ENCODE measurements at regions of chr19 and their contacts with region 1.

Region 1: DNA sequence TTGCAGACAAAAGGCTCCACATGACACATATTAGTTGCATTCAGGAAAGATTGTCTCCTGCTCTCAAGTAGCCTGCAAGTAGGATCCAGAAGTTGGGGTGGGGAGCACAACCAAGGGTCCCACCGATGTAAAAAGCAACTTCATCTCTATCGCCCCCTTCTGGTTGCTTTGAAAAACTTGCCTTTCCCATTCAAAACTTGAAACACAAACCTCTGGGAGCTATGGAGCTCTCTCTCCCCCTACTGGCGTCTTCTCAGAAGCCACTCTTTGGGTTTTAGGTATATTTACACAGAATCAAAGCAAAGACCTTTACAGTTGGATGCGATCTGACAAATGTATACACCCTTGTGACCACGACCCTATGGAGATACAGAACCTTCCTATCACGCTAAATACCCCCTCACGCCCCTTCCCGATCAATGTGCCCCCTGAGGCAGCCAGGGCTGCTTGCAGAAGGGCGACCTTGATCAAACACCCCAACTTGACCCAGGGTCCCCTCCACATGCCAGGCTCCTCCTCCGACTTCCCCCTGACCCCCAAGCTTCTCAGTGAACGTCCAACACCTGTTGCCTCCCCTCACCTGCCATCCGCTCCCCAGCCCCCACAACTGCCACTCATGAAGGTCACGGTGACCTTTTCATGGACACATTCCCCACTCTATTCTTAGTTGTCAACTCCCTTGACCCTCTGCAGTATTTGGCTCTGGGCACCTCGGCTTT is 10.1 kb downstream of the NOSIP start:
- DNase-seq: peak in 12 of 14 experiments; percentile 50 to 94 (median 66)
- ATAC-seq: peak; percentile 7
- H3K4me3 ChIP-seq: no peak overlapping the region
- H3K4me3 Mint-ChIP-seq: peak overlapping the region; percentile 85
- H3K27ac ChIP-seq: no peak overlapping the region
- H3K27ac Mint-ChIP-seq: peak overlapping the region; percentile 89
- H3K4me1 ChIP-seq: peaks cover 64% of the 10 kb centered on the region
- H3K4me1 Mint-ChIP-seq: peaks cover 55% of the 10 kb centered on the region
- H3K27me3 ChIP-seq: no peaks in the 10 kb centered on the region
- H3K27me3 Mint-ChIP-seq: no peaks in the 10 kb centered on the region
- CTCF ChIP-seq: peak; percentile 99

Region 2: DNA sequence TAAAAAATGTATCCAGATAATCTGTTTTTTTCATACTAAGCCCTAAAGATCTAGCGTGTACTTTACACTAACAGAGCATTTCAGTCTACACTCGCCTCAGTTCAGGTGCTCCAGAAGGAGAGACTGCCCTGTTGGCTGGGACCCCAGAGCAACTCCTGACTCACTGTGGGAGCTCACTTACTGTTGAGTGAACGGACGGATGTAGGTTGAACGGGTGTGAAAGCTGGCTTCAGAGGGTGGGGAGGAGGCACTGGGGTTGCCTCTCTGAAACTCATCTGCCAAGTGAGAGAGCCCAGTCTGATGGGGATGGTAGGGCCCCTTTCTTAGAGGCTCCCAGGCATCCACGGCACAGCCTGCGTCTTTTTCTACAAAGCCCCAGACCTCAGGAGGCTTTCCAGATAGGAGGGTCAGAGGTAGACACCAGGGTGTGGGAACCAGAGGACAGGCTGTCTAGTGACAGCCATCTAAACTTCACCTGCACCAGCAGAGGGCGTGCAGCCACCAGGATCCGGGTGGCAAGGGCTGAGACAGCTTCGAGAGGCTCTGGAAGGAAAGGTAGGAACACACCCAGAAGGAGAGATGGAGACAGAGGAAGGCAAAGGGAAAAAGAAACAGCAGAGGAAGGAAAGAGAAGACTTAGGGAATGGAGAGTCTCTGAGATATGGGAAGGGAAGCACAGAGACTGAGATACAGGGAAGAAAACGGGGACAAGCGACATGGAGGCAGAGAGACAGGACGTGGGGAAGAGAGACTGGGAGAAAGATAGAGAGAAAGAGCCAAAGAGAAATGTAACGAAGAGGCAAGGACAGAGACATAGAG is 178.5 kb before region 1 on chr19:
- CTCF ChIA-PET with region 1: interaction called, 7 read pairs
- POLR2A ChIA-PET with region 1: no interaction called
- intact Hi-C with region 1: loop called (anchors 2 kb)
- DNase-seq: peak; percentile 67 to 89 (median 76)
- ATAC-seq: peak; percentile 76
- H3K4me3 ChIP-seq: no peak overlapping the region
- H3K4me3 Mint-ChIP-seq: no peak overlapping the region
- H3K27ac ChIP-seq: no peak overlapping the region
- H3K27ac Mint-ChIP-seq: no peak overlapping the region
- H3K4me1 ChIP-seq: peaks cover 23% of the 10 kb centered on the region
- H3K4me1 Mint-ChIP-seq: peaks cover 19% of the 10 kb centered on the region
- H3K27me3 ChIP-seq: no peaks in the 10 kb centered on the region
- H3K27me3 Mint-ChIP-seq: no peaks in the 10 kb centered on the region
- CTCF ChIP-seq: peak; percentile 95

Region 3: GRCh38 chr19:49487277-49488045 is 82.8 kb before region 1 on chr19 and contains the start of gene RPL13A:
- CTCF ChIA-PET with region 1: interaction called, 4 read pairs
- POLR2A ChIA-PET with region 1: interaction called, 16 read pairs
- intact Hi-C with region 1: no loop called
- DNase-seq: peak; percentile 98 to 100 (median 99)
- ATAC-seq: peak; percentile 86
- H3K4me3 ChIP-seq: peak within 1 kb of the TSS; percentile 77
- H3K4me3 Mint-ChIP-seq: peak within 1 kb of the TSS; percentile 91
- H3K27ac ChIP-seq: peak within 1 kb of the TSS; percentile 60 to 81
- H3K27ac Mint-ChIP-seq: peak within 1 kb of the TSS; percentile 92
- H3K4me1 ChIP-seq: peaks cover 64% of the 10 kb centered on the region
- H3K4me1 Mint-ChIP-seq: peaks cover 55% of the 10 kb centered on the region
- H3K27me3 ChIP-seq: no peaks in the 10 kb centered on the region
- H3K27me3 Mint-ChIP-seq: no peaks in the 10 kb centered on the region
- CTCF ChIP-seq: no peak
- total RNA-seq, gene RPL13A: 5,328 to 5,481 TPM

Region 4: DNA sequence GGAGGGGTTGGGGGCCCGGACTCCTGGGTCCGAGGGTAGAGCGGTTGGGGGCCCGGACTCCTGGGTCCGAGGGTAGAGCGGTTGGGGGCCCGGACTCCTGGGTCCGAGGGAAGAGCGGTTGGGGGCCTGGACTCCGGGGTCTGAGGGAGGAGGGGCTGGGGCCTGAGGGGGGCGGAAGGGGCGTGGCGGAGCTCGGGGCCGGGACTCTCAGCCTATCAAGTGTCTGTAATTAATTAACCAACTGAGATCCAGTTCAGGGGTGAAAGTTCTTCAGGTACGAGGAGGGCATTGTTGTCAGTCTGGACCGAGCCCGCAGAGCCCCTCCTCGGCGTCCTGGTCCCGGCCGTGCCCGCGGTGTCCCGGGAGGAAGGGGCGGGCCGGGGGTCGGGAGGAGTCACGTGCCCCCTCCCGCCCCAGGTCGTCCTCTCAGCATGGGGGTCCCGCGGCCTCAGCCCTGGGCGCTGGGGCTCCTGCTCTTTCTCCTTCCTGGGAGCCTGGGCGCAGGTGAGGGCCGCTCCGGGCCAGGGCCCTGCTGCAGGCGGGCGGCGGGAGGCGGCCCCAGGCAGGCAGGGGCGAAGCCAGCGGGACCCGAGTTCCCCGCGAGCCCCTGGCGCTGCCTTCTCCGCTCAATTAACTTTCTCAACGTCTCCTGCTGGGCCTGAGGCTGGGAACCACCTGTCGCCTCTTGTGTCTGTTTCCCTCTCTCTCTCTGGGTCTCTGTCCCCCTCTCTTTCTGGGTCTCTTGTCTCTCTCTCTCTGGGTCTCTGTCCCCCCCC is 57.1 kb before region 1 on chr19:
- CTCF ChIA-PET with region 1: interaction called, 16 read pairs
- POLR2A ChIA-PET with region 1: interaction called, 7 read pairs
- intact Hi-C with region 1: no loop called
- DNase-seq: peak in 5 of 14 experiments; percentile 27 to 63 (median 56)
- ATAC-seq: peak; percentile 68
- H3K4me3 ChIP-seq: peak overlapping the region; percentile 60
- H3K4me3 Mint-ChIP-seq: peak overlapping the region; percentile 90
- H3K27ac ChIP-seq: peak overlapping the region; percentile 46 to 62
- H3K27ac Mint-ChIP-seq: peak overlapping the region; percentile 82
- H3K4me1 ChIP-seq: peaks cover 44% of the 10 kb centered on the region
- H3K4me1 Mint-ChIP-seq: peaks cover 46% of the 10 kb centered on the region
- H3K27me3 ChIP-seq: no peaks in the 10 kb centered on the region
- H3K27me3 Mint-ChIP-seq: no peaks in the 10 kb centered on the region
- CTCF ChIP-seq: no peak

Region 5: DNA sequence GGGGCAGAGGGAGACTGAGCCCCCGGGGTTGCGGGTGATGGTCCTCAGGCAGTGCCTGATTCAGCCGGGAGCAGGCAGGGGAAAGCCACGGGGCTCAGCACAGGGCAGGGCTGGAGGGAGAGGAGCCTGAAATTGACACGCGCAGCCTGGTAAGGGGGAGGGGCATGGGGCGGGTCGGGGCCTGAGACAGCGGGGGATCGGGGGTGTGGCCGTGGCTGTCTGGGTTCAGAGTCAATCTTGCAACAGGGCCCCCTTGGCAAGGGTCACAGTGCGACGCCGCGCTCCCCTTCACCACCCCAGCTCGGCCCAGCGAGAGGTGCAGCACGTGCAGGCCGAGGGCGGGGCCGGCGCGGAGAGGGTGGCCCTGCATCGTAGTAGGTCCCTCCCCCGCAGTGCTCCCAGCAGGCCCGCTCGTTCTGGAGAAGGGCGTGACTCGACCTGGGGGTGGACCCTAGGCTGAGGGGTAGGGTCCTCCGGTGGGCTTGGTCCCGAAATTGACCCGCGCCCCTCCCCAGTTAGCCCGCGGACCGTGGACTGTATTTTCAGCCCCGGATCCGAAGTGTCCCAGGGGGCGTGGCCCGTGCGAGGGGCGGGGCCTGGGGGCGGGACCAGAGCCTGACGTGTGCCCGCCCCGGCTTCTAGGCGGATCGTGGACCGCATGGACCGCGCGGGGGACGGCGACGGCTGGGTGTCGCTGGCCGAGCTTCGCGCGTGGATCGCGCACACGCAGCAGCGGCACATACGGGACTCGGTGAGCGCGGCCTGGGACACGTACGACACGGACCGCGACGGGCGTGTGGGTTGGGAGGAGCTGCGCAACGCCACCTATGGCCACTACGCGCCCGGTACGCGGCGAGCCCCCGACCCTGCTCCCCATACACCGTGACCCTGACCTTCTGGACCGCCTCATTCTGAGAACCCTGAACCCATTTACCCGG is 36.5 kb before region 1 on chr19:
- CTCF ChIA-PET with region 1: interaction called, 14 read pairs
- POLR2A ChIA-PET with region 1: interaction called, 19 read pairs
- intact Hi-C with region 1: loop called (anchors 1 to 5 kb)
- DNase-seq: peak; percentile 72 to 92 (median 82)
- ATAC-seq: peak; percentile 91
- H3K4me3 ChIP-seq: peak overlapping the region; percentile 70
- H3K4me3 Mint-ChIP-seq: peak overlapping the region; percentile 93
- H3K27ac ChIP-seq: no peak overlapping the region
- H3K27ac Mint-ChIP-seq: peak overlapping the region; percentile 71
- H3K4me1 ChIP-seq: peaks cover 28% of the 10 kb centered on the region
- H3K4me1 Mint-ChIP-seq: peaks cover 27% of the 10 kb centered on the region
- H3K27me3 ChIP-seq: no peaks in the 10 kb centered on the region
- H3K27me3 Mint-ChIP-seq: no peaks in the 10 kb centered on the region
- CTCF ChIP-seq: peak; percentile 38

Region 6: DNA sequence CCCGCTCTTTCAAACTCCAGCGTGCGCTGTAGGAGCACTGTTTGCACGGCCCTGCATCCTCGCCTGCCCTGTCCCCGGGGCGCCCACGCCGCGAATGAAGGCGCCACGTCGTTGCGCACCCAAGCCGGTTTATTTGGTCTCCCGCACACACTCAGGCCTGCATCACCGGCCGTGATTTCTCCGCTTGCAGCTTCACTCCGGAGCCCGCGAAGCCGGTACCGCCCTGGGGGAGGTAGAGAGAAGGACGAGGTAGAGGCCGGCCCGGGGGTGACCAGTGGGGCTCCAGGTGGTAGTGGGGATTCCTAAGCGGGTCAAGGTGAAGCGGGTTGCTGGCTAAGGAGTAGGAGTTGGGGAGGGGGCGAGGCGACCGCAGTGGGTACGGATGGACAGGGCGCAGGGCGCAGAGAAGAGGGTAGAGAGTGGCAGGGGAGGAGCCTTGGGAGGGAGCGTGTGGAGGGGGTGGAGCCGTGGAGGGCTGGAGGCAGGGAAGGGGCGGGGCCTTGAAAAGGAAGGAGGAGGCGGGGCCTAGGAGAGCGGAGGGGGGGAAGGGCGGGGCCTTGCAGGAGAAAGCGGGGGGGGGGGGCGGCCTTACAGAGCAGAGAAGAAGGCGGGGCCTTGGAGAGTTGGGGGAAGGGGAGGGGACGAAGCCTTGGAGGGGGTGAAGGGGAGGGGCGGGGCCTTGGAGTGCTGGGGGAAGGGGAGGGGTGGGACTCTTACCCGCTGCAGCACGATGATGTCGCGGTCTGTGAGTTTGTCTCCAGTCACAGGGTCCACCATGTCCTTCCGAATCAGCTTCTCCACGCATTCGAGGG is 14.5 kb before region 1 on chr19:
- CTCF ChIA-PET with region 1: interaction called, 134 read pairs
- POLR2A ChIA-PET with region 1: interaction called, 150 read pairs
- intact Hi-C with region 1: loop called in 1 of 2 experiments (anchors 1 kb)
- DNase-seq: peak; percentile 65 to 94 (median 84)
- ATAC-seq: peak; percentile 64
- H3K4me3 ChIP-seq: peak overlapping the region; percentile 68
- H3K4me3 Mint-ChIP-seq: peak overlapping the region; percentile 62
- H3K27ac ChIP-seq: peak overlapping the region; percentile 61 to 62
- H3K27ac Mint-ChIP-seq: peak overlapping the region; percentile 96
- H3K4me1 ChIP-seq: peaks cover 96% of the 10 kb centered on the region
- H3K4me1 Mint-ChIP-seq: peaks cover 74% of the 10 kb centered on the region
- H3K27me3 ChIP-seq: peaks cover 0 to 3% of the 10 kb centered on the region in 2 experiments
- H3K27me3 Mint-ChIP-seq: no peaks in the 10 kb centered on the region
- CTCF ChIP-seq: no peak